Common myeloid progenitor, CD34-positive (primary cell): ENCODE measurements at regions of chr11 and their contacts with region 1.

Region 1: DNA sequence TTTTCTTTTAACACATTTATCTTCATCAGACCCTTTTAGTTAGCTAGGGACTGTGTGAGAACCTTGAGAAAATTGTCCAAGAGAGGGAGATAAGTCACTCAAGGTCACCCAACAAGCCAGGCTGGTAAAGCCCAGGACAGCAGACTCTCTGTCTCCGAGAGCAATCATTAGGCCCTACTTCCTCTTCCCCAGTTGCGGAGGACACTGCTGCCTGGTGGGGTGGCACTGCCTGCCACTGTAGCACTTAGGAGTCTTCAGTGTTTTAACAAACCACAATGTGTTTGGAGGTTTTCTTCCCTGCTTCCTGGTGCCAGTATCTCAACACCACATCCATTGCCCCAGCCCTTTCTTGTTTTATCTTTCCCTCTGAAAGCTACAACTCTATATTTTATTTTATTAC is 132.1 kb upstream of the LDLRAD3 start:
- DNase-seq: peak; percentile 53 to 86 (median 75)
- H3K4me3 ChIP-seq: peak overlapping the region in 1 of 7 experiments; percentile 15
- H3K27ac ChIP-seq: peak overlapping the region in 1 of 2 experiments; percentile 10
- H3K4me1 ChIP-seq: peaks cover 6 to 34% (median 14%) of the 10 kb centered on the region in 4 experiments
- H3K27me3 ChIP-seq: no peaks in the 10 kb centered on the region

Region 2: GRCh38 chr11:35780951-35781860 is 30.6 kb before region 1 on chr11:
- CTCF ChIA-PET with region 1: no interaction called
- POLR2A ChIA-PET with region 1: no interaction called
- DNase-seq: no peak
- H3K4me3 ChIP-seq: no peak overlapping the region
- H3K27ac ChIP-seq: no peak overlapping the region
- H3K4me1 ChIP-seq: peaks cover 0 to 2% (median 0%) of the 10 kb centered on the region in 4 experiments
- H3K27me3 ChIP-seq: no peaks in the 10 kb centered on the region

Region 3: DNA sequence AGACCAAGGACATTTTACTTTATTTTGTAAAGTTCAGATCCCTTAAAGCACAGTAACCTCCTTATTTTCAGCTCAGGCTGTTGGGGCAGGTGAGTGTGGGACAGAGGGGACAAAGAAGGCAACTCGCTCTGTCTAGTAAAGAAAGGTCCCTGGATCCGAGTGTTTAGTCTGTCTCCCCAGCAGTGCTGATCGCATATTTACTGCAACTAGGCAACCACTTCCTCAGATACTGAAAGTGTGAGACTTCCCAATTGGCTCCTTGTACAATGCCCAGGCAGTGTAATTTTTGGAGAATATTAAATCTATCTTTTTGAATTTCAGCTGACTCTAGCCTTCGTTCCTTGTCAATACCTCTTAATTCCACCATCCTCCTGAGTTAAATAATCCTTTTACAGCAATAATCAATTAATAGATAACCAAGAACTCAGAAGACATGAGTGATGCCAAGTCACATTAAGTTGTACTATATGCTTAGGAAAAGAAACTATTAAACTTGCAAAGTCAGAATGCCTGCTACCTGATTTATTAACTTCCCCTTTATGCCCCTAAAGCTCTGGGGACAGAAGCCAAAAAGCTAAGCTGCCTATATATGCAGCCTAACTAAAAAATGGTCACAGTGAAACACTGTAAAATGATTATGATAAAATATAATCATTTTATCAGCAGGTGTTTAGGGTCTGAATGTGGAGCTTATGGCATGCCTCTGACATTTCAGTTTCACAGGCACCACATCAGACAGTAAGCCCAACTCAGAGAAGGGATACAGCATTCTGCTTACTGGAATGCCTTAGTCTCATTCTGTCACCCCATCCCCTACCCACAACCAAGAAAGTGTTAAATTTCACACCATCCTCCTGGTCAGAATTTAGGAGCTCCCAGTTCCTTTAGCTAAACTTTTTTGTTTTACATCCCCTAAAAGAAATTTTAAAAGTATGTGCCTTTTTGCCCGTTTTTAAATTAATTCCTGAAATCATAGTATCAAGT is 10.5 kb before region 1 on chr11:
- CTCF ChIA-PET with region 1: interaction called, 11 read pairs
- POLR2A ChIA-PET with region 1: no interaction called
- DNase-seq: peak; percentile 76 to 94 (median 91)
- H3K4me3 ChIP-seq: peak overlapping the region in 4 of 7 experiments; percentile 8 to 67 (median 45)
- H3K27ac ChIP-seq: peak overlapping the region; percentile 95 to 97
- H3K4me1 ChIP-seq: peaks cover 10 to 26% (median 15%) of the 10 kb centered on the region in 4 experiments
- H3K27me3 ChIP-seq: no peaks in the 10 kb centered on the region